ENCODE measurements at regions of chr10 and their contacts with region 1.

Region 1: DNA sequence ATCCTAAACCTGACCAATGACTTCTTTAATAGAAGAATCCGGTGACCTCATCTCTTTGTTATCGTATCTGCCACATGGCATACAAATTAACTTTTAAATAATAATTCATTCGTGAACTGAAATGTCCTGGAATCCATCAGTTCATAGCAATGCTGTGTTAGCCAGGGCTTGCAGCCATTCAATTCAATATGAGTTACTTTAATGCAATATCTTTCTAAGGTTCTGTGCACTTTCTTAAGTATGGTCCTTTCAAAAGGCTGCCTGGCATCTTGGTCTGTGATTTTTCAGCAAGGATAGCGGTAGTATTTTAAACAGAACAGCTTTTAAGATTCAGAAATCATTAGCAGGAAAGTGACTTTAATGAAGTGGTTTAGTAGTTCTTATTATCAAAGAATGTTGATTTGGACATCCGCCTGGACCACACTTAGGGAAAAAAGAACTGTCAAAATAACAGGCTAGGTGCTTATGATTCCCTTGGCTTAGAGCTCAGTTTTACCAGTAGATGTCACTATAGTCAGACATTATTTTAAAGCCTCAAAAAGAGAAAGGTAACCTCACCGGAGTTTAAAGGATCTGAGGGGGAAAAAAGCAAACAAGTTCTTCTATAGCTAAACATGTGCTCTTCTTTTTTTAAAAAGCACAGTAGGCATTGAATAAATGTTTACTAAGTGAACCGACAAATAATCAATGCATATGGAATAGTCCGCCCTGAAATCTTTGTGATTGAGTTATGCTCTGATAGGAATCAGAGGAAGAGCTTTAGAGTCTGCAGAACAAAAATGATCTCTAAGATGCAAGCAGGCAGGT is 22.7 kb downstream of the SLC35G1 start:
- DNase-seq: peak; percentile 30
- H3K4me3 ChIP-seq: no peak overlapping the region
- H3K27ac ChIP-seq: no peak overlapping the region
- H3K4me1 ChIP-seq: no peaks in the 10 kb centered on the region
- H3K27me3 ChIP-seq: no peaks in the 10 kb centered on the region
- CTCF ChIP-seq: peak; percentile 61

Region 2: GRCh38 chr10:94123258-94123995 is 207.0 kb after region 1 on chr10:
- CTCF ChIA-PET with region 1: no interaction called
- POLR2A ChIA-PET with region 1: no interaction called
- intact Hi-C with region 1: no loop called
- DNase-seq: no peak
- H3K4me3 ChIP-seq: no peak overlapping the region
- H3K27ac ChIP-seq: no peak overlapping the region
- H3K4me1 ChIP-seq: no peaks in the 10 kb centered on the region
- H3K27me3 ChIP-seq: no peaks in the 10 kb centered on the region
- CTCF ChIP-seq: no peak

Region 3: GRCh38 chr10:94279835-94280709 is 363.6 kb after region 1 on chr10:
- CTCF ChIA-PET with region 1: no interaction called
- POLR2A ChIA-PET with region 1: no interaction called
- intact Hi-C with region 1: no loop called
- DNase-seq: peak; percentile 59
- H3K4me3 ChIP-seq: no peak overlapping the region
- H3K27ac ChIP-seq: no peak overlapping the region
- H3K4me1 ChIP-seq: no peaks in the 10 kb centered on the region
- H3K27me3 ChIP-seq: no peaks in the 10 kb centered on the region
- CTCF ChIP-seq: peak; percentile 95

Region 4: DNA sequence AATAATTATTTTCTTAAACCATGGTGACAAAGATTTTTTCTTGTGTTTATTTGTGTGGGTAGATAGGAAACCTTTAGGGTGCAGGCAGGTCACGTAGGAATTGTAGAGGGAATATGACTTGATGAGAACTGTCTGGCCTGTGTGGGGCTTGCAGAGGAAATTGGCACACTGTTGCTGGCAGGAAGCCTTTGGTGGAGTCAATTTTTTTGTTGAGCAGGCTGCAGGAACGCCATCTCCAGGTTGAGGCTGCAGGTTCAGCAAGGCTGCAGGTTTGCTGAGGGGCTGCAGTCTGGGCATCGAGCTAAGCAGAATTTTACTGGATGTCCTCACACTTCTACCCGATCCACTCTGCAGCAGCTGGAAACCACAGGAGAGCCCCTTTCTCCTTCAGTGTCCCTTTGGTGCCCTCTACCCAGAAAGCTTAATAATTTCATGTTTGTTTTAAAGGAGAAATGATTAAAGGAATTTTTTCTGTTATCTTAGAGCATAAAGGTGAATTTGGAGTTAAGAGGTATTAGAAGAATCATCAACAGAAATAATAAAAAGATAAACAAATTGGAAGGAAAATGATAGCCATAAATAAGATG is 522.9 kb after region 1 on chr10:
- CTCF ChIA-PET with region 1: interaction called, 9 read pairs
- POLR2A ChIA-PET with region 1: no interaction called
- intact Hi-C with region 1: loop called (anchors 2 kb)
- DNase-seq: peak; percentile 12
- H3K4me3 ChIP-seq: no peak overlapping the region
- H3K27ac ChIP-seq: no peak overlapping the region
- H3K4me1 ChIP-seq: no peaks in the 10 kb centered on the region
- H3K27me3 ChIP-seq: peaks cover 6% of the 10 kb centered on the region
- CTCF ChIP-seq: no peak